Thyroid gland (tissue), 4 donors: ENCODE measurements at regions of chr10 and their contacts with region 1.

Region 1: GRCh38 chr10:21078410-21079329 is 181.6 kb upstream of the NEBL start:
- DNase-seq: peak; percentile 76 to 81
- H3K4me3 ChIP-seq: no peak overlapping the region
- H3K27ac ChIP-seq: peak overlapping the region in 1 of 3 donors; percentile 32
- H3K4me1 ChIP-seq: peaks cover 7% of the 10 kb centered on the region in 2 donors
- H3K27me3 ChIP-seq: no peaks in the 10 kb centered on the region
- CTCF ChIP-seq: peak; percentile 34 to 84 (median 72)
- POLR2A ChIP-seq: no peak

Region 2: GRCh38 chr10:21273400-21273932 is 194.8 kb after region 1 on chr10:
- intact Hi-C with region 1: loop called (anchors 5 kb)
- DNase-seq: no peak
- H3K4me3 ChIP-seq: no peak overlapping the region
- H3K27ac ChIP-seq: no peak overlapping the region
- H3K4me1 ChIP-seq: no peaks in the 10 kb centered on the region
- H3K27me3 ChIP-seq: no peaks in the 10 kb centered on the region
- CTCF ChIP-seq: no peak
- POLR2A ChIP-seq: no peak